ENCODE measurements at regions of chr20 and their contacts with region 1.

Region 1: DNA sequence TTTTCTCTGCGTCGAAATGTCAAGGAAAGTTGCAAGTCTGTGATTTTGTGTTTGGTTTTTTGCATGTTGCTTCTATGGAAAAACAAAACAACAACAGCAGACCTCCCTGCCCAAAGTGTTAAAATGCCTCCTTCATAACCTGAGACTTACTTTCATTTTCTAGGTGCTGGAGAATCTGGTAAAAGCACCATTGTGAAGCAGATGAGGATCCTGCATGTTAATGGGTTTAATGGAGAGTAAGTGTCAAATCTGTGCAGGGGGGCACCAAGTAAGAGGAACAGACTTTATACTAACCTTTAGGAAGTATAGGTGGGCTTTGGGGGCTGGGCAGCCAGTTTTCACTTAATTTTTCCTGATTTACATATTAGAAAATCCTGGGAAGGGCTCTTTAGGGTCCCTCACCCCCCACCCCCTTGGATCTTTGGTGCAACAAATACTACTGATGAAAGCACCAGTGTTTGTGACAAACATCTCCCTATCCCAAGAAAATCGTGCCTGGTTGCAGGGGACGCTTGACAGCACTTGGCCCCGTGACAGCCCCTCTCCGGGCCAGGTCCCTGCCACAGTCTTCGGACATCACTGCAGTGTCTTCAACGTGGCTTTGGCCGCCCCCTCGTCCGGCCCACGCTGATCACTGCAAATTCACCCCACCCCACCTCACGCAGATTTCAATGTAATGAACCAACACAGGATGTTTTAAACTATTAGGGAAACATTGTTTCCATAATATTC is 43.1 kb downstream of the GNAS start:
- DNase-seq: no peak
- ATAC-seq: no peak
- H3K4me3 ChIP-seq: no peak overlapping the region
- H3K27ac ChIP-seq: no peak overlapping the region
- H3K4me1 ChIP-seq: peaks cover 21% of the 10 kb centered on the region
- H3K27me3 ChIP-seq: no peaks in the 10 kb centered on the region
- CTCF ChIP-seq: no peak
- POLR2A ChIP-seq: no peak
- RAD21 ChIP-seq: no peak

Region 2: DNA sequence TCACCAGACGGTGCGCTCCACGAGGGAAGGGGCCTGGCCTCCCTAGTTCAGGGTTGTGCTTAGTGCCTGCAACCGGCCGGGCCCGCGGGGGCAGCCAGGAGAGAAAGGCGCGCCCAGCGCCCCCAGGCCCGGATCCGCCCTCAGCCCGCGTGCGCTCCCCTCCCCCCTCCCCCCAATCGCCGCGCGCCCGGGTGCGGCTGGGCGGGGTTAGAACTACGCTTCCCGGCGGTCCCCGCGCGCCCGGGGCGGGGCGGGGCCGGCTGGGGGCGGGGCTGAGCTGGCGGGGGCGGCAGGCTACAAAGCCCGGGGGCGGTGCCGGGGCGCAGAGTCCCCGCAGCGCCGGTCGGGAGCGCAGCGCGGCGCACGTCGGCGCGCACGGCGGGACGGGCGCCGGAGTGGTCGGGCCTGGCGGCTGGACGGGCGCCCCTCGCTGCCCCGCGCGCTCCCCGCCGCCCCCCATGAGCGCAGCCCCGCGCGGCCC is 1504.5 kb before region 1 on chr20 and contains the start of gene RBM38:
- CTCF ChIA-PET with region 1: no interaction called
- POLR2A ChIA-PET with region 1: no interaction called
- dilution Hi-C with region 1: no loop called
- in situ Hi-C with region 1: no loop called
- intact Hi-C with region 1: loop called (anchors 5 kb)
- DNase-seq: peak; percentile 49
- ATAC-seq: peak; percentile 96
- H3K4me3 ChIP-seq: peak within 1 kb of the TSS; percentile 99
- H3K27ac ChIP-seq: peak within 1 kb of the TSS; percentile 30; the same call in 1 of the 2 replicates
- H3K4me1 ChIP-seq: peaks cover 9% of the 10 kb centered on the region
- H3K27me3 ChIP-seq: no peaks in the 10 kb centered on the region
- CTCF ChIP-seq: no peak
- POLR2A ChIP-seq: no peak
- RAD21 ChIP-seq: no peak
- total RNA-seq, gene RBM38: 5.2 and 6.9 TPM in 2 replicates

Region 3: DNA sequence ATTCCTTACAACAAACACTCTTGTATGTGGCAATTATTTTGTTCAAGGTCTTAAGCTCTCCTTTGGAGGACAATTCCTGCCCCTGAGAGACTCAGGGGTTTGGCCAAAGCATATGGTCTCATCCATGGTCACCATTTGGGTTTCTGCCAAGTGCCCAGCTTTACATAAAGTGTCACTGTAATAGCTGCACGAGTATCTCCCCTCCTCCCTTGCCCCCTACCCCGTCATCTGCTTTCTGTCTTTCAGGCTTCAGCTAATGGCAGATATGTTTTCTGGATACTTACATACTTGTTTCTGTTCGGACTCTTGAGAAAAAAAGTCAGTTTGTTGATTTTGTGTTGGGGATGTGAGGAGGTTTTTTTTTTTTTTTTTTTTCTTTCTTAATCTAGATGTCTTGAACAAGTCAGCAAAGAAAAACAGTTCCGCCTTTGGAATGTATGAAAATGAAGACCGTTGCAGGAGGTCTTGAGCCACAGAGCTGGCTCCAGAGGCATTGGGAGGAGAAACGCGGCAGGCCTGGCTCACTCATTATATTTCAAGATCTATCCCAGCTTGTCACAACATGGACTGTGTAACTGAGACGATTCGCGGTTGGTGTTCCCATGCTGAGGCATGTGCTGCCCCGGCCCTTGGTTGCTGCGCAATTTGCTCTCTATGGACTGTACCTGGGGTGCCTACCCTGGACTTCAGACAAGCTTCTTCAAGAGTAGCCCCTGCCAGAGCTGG is 277.1 kb before region 1 on chr20:
- CTCF ChIA-PET with region 1: no interaction called
- POLR2A ChIA-PET with region 1: no interaction called
- dilution Hi-C with region 1: no loop called
- in situ Hi-C with region 1: no loop called
- intact Hi-C with region 1: no loop called
- DNase-seq: peak; percentile 82
- ATAC-seq: peak; percentile 85
- H3K4me3 ChIP-seq: no peak overlapping the region
- H3K27ac ChIP-seq: peak overlapping the region; percentile 73
- H3K4me1 ChIP-seq: peaks cover 23% of the 10 kb centered on the region
- H3K27me3 ChIP-seq: no peaks in the 10 kb centered on the region
- CTCF ChIP-seq: no peak
- POLR2A ChIP-seq: no peak
- RAD21 ChIP-seq: no peak

Region 4: DNA sequence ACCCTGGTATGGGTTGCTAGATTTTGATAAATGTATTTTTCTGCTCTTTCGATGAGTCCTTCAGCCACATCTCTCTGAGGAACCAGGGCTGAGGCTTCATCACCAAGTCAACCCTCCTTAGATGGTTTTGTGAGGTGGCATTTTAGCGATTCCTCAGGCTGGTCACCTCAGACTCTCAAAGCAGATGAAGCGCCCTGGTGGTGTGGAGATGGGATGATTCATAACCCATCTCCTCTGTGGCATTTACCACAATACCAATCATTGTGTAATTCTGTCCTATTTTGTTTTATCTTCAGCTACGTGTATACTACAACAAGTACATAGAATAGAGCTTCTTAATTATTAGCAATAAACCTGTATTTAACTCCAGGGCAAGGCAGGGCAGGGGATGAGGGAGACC is 347.1 kb after region 1 on chr20:
- CTCF ChIA-PET with region 1: no interaction called
- POLR2A ChIA-PET with region 1: no interaction called
- dilution Hi-C with region 1: no loop called
- in situ Hi-C with region 1: no loop called
- intact Hi-C with region 1: no loop called
- DNase-seq: no peak
- ATAC-seq: no peak
- H3K4me3 ChIP-seq: no peak overlapping the region
- H3K27ac ChIP-seq: no peak overlapping the region
- H3K4me1 ChIP-seq: no peaks in the 10 kb centered on the region
- H3K27me3 ChIP-seq: no peaks in the 10 kb centered on the region; the same call in 1 of the 2 replicates
- CTCF ChIP-seq: no peak
- POLR2A ChIP-seq: no peak
- RAD21 ChIP-seq: no peak

Measured in IMR-90 (cell line).